ENCODE measurements at regions of chr1 and their contacts with region 1.

Region 1: GRCh38 chr1:78114034-78114956 is 68.5 kb downstream of the GIPC2 start:
- DNase-seq: peak; percentile 89
- H3K4me3 Mint-ChIP-seq: no peak overlapping the region
- H3K27ac Mint-ChIP-seq: no peak overlapping the region
- H3K4me1 Mint-ChIP-seq: peaks cover 3% of the 10 kb centered on the region
- H3K27me3 Mint-ChIP-seq: peaks cover 3% of the 10 kb centered on the region

Region 2: GRCh38 chr1:77143529-77144121 is 970.7 kb before region 1 on chr1:
- intact Hi-C with region 1: loop called (anchors 5 kb)
- DNase-seq: no peak
- H3K4me3 Mint-ChIP-seq: no peak overlapping the region
- H3K27ac Mint-ChIP-seq: no peak overlapping the region
- H3K4me1 Mint-ChIP-seq: no peaks in the 10 kb centered on the region
- H3K27me3 Mint-ChIP-seq: no peaks in the 10 kb centered on the region

Region 3: GRCh38 chr1:77759071-77760028 is 354.9 kb before region 1 on chr1 and contains the start of gene USP33:
- intact Hi-C with region 1: loop called (anchors 5 kb)
- DNase-seq: peak; percentile 98
- H3K4me3 Mint-ChIP-seq: peak within 1 kb of the TSS; percentile 95
- H3K27ac Mint-ChIP-seq: peak within 1 kb of the TSS; percentile 96
- H3K4me1 Mint-ChIP-seq: peaks cover 27% of the 10 kb centered on the region
- H3K27me3 Mint-ChIP-seq: peaks cover 2% of the 10 kb centered on the region
- total RNA-seq, gene USP33: 39.9 and 47.4 TPM in 2 replicates

Region 4: DNA sequence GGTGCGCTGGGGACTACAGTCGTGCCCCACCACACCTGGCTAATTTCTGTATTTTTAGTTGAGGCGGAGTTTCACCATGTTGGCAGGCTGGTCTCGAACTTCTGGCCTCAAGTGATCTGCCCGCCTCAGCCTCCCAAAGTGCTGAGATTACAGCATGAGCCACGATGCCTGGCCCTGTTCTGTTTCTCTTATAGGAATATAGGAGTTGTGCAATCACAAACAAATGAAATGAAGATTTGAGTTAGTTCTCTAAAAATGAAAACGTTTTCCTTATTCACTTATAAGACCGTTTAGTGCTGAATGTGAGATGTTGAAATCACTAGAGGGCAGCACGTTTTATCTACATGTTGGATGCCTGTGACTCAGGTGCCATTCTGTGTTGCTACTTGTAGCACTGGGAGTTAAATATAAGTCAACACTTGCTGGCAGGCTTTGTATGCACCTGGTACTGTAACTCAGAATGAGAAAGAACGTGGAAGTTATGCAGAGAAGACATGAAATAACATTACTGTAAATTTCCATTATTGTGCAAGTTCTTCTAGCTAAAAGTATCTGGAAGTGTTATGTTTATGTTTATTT is 289.1 kb before region 1 on chr1:
- intact Hi-C with region 1: loop called (anchors 1 kb)
- DNase-seq: peak; percentile 63
- H3K4me3 Mint-ChIP-seq: no peak overlapping the region
- H3K27ac Mint-ChIP-seq: no peak overlapping the region
- H3K4me1 Mint-ChIP-seq: peaks cover 5% of the 10 kb centered on the region
- H3K27me3 Mint-ChIP-seq: no peaks in the 10 kb centered on the region

Region 5: GRCh38 chr1:78045926-78046778 is 68.1 kb before region 1 on chr1 and contains the start of gene GIPC2:
- intact Hi-C with region 1: loop called (anchors 10 kb)
- DNase-seq: peak; percentile 72
- H3K4me3 Mint-ChIP-seq: peak within 1 kb of the TSS; percentile 81
- H3K27ac Mint-ChIP-seq: peak within 1 kb of the TSS; percentile 30
- H3K4me1 Mint-ChIP-seq: peaks cover 25% of the 10 kb centered on the region
- H3K27me3 Mint-ChIP-seq: peaks cover 47% of the 10 kb centered on the region
- total RNA-seq, gene GIPC2: 0.05 TPM in 1 of 2 replicates, not detected in the other

Measured in activated CD4-positive, alpha-beta T cell treated with anti-CD3 and anti-CD28 coated beads, Interleukin-2, amount 10 ng/mL, durations not matched to agents 24 days and 14 days (primary cell).